ENCODE measurements at regions of chr4 and their contacts with region 1.

Region 1: GRCh38 chr4:176277162-176277904 is 8.3 kb upstream of the ASB5 start:
- DNase-seq: peak; percentile 58
- H3K4me3 ChIP-seq: no peak overlapping the region
- H3K27ac ChIP-seq: peak overlapping the region; percentile 6 to 43
- H3K4me1 ChIP-seq: no peaks in the 10 kb centered on the region
- H3K27me3 ChIP-seq: no peaks in the 10 kb centered on the region
- CTCF ChIP-seq: peak; percentile 13 to 46 (median 24)
- POLR2A ChIP-seq: no peak

Region 2: DNA sequence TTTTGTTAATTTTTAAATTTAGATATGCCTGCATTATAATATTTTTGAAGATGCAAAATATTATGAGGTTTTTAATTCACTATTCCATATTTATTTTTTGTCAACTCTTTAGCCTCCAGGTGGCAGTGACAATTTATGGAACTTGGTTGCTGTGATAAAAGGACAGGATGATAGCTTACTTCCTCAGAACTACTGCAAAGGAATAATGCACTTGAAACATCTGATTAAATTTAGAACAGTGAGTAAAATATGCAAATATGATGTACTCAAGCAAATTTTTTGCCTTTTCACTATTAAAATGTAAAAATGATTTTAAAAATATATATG is 127.0 kb before region 1 on chr4:
- intact Hi-C with region 1: loop called (anchors 2 kb)
- DNase-seq: no peak
- H3K4me3 ChIP-seq: no peak overlapping the region
- H3K27ac ChIP-seq: no peak overlapping the region
- H3K4me1 ChIP-seq: no peaks in the 10 kb centered on the region
- H3K27me3 ChIP-seq: no peaks in the 10 kb centered on the region
- CTCF ChIP-seq: peak in 2 of 4 experiments; percentile 40 to 61
- POLR2A ChIP-seq: no peak

Region 3: GRCh38 chr4:176195184-176195978 is 82.0 kb before region 1 on chr4 and contains the start of gene SPATA4:
- intact Hi-C with region 1: loop called (anchors 10 kb)
- DNase-seq: peak; percentile 93
- H3K4me3 ChIP-seq: peak within 1 kb of the TSS; percentile 41 to 51
- H3K27ac ChIP-seq: peak within 1 kb of the TSS; percentile 65 to 77
- H3K4me1 ChIP-seq: no peaks in the 10 kb centered on the region
- H3K27me3 ChIP-seq: no peaks in the 10 kb centered on the region
- CTCF ChIP-seq: no peak
- POLR2A ChIP-seq: peak; percentile 32
- total RNA-seq, gene SPATA4: 0.68 to 10.2 TPM

Region 4: GRCh38 chr4:176319704-176320339 is 42.5 kb after region 1 on chr4 and contains the start of gene SPCS3:
- intact Hi-C with region 1: loop called (anchors 10 kb)
- DNase-seq: peak; percentile 97
- H3K4me3 ChIP-seq: peak within 1 kb of the TSS; percentile 87 to 93
- H3K27ac ChIP-seq: peak within 1 kb of the TSS; percentile 92 to 96
- H3K4me1 ChIP-seq: no peaks in the 10 kb centered on the region
- H3K27me3 ChIP-seq: no peaks in the 10 kb centered on the region
- CTCF ChIP-seq: peak in 2 of 4 experiments; percentile 10 to 11
- POLR2A ChIP-seq: peak; percentile 82
- total RNA-seq, gene SPCS3: 41.7 to 68.4 TPM